ENCODE measurements at regions of chr4 and their contacts with region 1.

Region 1: DNA sequence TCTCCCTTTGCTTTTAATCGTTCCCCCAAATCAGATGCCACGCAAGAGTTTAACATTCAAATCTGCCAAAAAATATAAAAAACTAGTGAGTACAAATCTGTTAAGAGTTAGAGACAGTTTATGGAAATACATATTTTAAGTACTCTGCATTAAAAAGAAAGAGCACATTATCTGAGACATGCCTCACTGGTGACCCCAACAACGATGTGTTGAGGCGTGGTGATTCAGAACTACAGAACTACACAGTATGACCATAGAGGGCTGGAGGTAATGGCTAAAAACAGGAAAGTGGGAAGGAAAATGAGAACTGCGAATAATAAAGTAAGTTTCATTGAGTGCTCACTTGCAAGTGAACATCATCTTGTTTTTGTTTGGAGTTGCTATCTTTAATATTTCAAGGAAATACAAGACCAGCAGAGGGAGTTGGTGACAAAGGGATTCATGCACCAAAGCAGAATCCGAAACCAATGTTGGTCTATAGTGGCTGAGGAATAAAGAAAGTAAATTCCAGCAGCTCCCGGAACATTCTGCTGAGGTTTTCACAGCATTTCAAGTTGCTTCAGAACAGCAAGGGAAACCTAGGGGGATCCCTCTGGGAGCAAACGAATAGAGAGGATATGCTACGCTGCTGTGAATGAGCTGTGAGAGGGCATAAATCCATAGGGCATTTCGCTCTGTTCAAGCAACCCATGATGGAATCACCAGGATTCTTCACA is 92.2 kb downstream of the DCHS2 start:
- DNase-seq: no peak
- H3K4me3 ChIP-seq: no peak overlapping the region
- H3K27ac ChIP-seq: no peak overlapping the region
- H3K4me1 ChIP-seq: no peaks in the 10 kb centered on the region
- H3K27me3 ChIP-seq: no peaks in the 10 kb centered on the region
- CTCF ChIP-seq: peak in 1 of 3 experiments; percentile 24
- POLR2A ChIP-seq: no peak

Region 2: DNA sequence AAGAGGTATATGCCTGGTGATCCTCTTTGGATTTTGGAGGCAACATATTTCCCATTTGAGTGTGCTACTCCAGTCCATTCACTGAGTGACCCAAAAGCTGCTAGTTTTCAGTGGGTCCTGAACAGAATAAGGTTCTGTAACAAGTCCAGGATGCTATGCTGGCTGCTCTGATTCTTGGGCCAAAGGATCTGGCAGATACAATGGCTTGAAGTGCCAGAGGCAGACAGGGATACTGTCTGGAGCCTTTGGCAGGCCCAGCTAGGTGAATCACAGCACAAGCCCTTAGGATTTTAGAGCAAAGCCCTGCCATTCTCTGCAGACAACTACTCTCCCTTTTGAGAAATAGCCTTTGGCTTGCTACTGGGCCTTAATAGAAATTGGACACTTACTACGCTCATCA is 51.5 kb after region 1 on chr4:
- intact Hi-C with region 1: no loop called
- DNase-seq: no peak
- H3K4me3 ChIP-seq: no peak overlapping the region
- H3K27ac ChIP-seq: no peak overlapping the region
- H3K4me1 ChIP-seq: no peaks in the 10 kb centered on the region
- H3K27me3 ChIP-seq: no peaks in the 10 kb centered on the region
- CTCF ChIP-seq: no peak
- POLR2A ChIP-seq: no peak

Region 3: DNA sequence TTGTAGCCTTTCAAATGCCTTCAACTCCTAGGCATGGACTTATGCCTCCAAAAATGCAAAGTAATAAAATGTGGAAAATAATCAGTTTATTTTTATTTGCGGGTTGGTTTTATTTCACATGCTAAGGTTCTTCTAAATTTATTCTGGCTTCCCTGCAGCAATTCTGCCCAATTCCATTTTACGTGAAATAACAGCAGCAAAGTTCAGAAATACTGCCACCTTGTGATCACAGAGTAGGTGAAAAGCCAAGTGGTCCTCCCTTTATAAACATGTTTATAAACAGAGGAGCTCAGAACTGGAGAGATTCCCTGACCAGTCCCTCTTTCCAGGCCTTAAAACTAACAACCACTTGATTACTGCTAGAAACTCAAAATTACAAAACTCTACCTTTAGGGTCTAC is 106.8 kb after region 1 on chr4:
- intact Hi-C with region 1: loop called (anchors 5 kb)
- DNase-seq: no peak
- H3K4me3 ChIP-seq: no peak overlapping the region
- H3K27ac ChIP-seq: no peak overlapping the region
- H3K4me1 ChIP-seq: no peaks in the 10 kb centered on the region
- H3K27me3 ChIP-seq: no peaks in the 10 kb centered on the region
- CTCF ChIP-seq: peak in 1 of 3 experiments; percentile 27
- POLR2A ChIP-seq: no peak

Region 4: DNA sequence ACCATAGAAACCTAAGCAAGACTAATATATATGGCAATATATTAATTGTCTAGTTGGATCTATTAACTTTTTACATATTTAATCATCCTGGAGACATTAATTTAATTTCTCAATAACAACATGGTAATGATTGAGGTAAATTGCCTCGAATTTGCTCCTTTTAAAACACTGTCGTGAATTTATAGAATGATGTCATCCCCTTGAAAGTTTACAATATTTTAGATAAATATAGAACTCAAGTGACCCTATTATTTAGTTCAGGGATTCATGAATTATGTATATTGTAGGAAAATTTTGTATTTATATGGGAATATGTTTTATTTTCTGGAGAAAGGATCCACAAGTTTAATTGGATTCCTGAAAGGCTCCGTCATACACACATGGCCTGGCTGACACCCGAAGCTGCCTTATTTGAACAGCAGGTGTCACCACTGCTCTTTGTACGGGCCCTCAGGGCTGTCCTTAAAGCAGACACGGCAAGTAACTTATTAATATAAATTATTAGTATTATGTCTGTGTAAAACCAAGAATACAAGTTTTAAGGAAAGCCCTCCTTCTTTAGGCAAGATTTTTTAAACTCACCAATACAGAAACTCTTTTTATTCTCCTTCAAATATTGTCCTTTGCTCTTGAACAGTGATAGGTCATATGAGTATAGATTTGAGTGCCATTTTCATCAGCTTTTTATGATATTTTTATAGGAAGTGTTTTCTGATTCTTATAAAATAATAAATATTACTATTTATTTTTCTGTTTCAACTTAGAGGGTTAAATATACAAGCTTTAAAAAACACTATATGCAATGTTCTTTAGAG is 152.7 kb after region 1 on chr4:
- intact Hi-C with region 1: no loop called
- DNase-seq: no peak
- H3K4me3 ChIP-seq: no peak overlapping the region
- H3K27ac ChIP-seq: no peak overlapping the region
- H3K4me1 ChIP-seq: peaks cover 20% of the 10 kb centered on the region
- H3K27me3 ChIP-seq: no peaks in the 10 kb centered on the region
- CTCF ChIP-seq: peak; percentile 54 to 76 (median 55)
- POLR2A ChIP-seq: no peak